ENCODE measurements at regions of chr2 and their contacts with region 1.

Region 1: DNA sequence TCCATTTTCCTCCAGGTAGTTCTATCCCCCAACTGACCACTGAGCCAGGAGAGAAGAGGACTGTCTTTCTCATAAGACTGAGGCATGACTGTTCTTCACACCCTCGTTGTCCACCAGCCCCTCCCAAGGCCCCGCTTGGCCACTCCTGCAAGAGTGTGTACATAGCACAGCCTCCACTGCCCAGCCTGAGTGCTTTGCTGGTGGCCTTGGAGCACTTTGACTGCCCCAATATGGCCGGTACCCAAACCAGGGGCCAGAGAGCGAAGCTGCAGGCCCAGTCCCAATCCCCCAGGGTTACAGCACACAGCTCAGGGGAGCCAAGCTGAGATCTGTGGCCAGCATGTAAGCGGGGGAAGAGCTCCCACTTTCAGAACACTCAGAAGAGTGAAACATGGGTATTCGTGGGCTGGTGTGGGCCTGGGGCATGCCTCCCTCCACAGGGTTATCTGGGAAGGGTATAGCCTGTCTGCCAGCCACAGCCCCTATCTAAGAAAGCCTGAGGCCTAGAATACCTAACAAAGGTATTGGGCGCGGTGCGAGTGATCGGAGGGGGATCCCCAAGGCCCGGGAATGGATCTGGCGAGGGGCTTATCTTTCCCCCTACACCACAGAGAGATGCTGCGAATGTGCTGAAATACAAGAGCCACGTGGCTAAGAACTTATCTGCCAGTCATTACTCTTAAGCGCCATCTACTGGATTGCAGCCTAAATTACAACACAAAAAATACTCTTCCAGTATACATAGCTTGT is 163.8 kb downstream of the WDPCP start:
- DNase-seq: peak in 3 of 14 experiments; percentile 41 to 49 (median 47)
- ATAC-seq: no peak
- H3K4me3 ChIP-seq: no peak overlapping the region
- H3K4me3 Mint-ChIP-seq: no peak overlapping the region
- H3K27ac ChIP-seq: no peak overlapping the region
- H3K27ac Mint-ChIP-seq: no peak overlapping the region
- H3K4me1 ChIP-seq: no peaks in the 10 kb centered on the region
- H3K4me1 Mint-ChIP-seq: no peaks in the 10 kb centered on the region
- H3K27me3 ChIP-seq: no peaks in the 10 kb centered on the region
- H3K27me3 Mint-ChIP-seq: no peaks in the 10 kb centered on the region
- CTCF ChIP-seq: peak; percentile 51

Region 2: DNA sequence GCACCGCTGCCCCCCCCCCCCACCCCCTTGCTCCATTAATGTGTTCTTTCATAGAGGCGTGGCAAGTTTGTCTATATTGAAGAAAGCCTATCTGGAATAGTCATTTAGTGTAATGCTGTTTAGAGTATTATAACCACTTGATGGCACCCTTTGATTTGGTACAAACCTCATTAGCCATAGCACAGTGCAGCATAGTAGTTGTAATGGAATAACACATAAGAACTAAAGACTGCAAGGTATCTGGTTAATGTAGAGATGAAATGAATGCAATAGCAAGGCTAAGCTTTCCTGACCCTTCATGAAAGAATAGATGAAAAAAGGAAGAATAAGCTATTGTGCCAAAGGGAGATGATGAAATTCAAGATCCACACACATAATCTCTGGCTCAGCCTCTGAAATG is 637.1 kb before region 1 on chr2:
- CTCF ChIA-PET with region 1: no interaction called
- POLR2A ChIA-PET with region 1: no interaction called
- intact Hi-C with region 1: loop called in 1 of 2 experiments (anchors 10 kb)
- DNase-seq: peak in 3 of 14 experiments; percentile 10 to 17 (median 14)
- ATAC-seq: peak; percentile 43
- H3K4me3 ChIP-seq: no peak overlapping the region
- H3K4me3 Mint-ChIP-seq: no peak overlapping the region
- H3K27ac ChIP-seq: no peak overlapping the region
- H3K27ac Mint-ChIP-seq: no peak overlapping the region
- H3K4me1 ChIP-seq: no peaks in the 10 kb centered on the region
- H3K4me1 Mint-ChIP-seq: no peaks in the 10 kb centered on the region
- H3K27me3 ChIP-seq: no peaks in the 10 kb centered on the region
- H3K27me3 Mint-ChIP-seq: no peaks in the 10 kb centered on the region
- CTCF ChIP-seq: no peak

Region 3: GRCh38 chr2:63186331-63186730 is 238.2 kb before region 1 on chr2:
- CTCF ChIA-PET with region 1: no interaction called
- POLR2A ChIA-PET with region 1: no interaction called
- intact Hi-C with region 1: no loop called
- DNase-seq: no peak
- ATAC-seq: no peak
- H3K4me3 ChIP-seq: no peak overlapping the region
- H3K4me3 Mint-ChIP-seq: no peak overlapping the region
- H3K27ac ChIP-seq: no peak overlapping the region
- H3K27ac Mint-ChIP-seq: no peak overlapping the region
- H3K4me1 ChIP-seq: no peaks in the 10 kb centered on the region
- H3K4me1 Mint-ChIP-seq: no peaks in the 10 kb centered on the region
- H3K27me3 ChIP-seq: no peaks in the 10 kb centered on the region
- H3K27me3 Mint-ChIP-seq: no peaks in the 10 kb centered on the region
- CTCF ChIP-seq: no peak